Sciatic nerve (tissue), 2 donors: ENCODE measurements at regions of chr3 and their contacts with region 1.

Region 1: GRCh38 chr3:143885780-143886427 is 37.6 kb upstream of the SLC9A9 start:
- DNase-seq: no peak
- ATAC-seq: peak; percentile 45

Region 2: DNA sequence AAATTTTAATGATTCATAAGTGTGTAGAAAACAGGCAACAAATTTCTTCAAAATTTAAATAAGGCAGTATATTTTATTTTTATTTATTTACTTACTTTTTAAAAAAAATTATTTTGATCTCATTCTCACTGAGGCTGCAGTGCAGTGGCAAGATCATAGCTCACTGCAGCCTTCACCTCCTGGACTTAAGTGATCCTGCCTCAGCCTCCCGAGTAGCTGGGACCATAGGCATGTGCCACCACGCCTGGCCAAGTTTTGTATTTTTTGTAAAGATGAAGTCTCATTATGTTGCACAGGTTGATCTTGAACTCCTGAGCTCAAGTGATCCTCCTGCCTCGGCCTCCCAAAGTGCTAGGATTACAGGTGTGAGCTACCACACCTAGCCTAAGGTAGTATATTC is 1376.8 kb before region 1 on chr3:
- intact Hi-C with region 1: loop called (anchors 5 kb)
- DNase-seq: no peak
- ATAC-seq: no peak

Region 3: GRCh38 chr3:143595456-143596077 is 290.3 kb before region 1 on chr3:
- intact Hi-C with region 1: no loop called
- DNase-seq: no peak
- ATAC-seq: no peak

Region 4: GRCh38 chr3:143819890-143820289 is 66.0 kb before region 1 on chr3:
- intact Hi-C with region 1: loop called (anchors 2 kb)
- DNase-seq: no peak
- ATAC-seq: no peak